Esophagus squamous epithelium (tissue), 5 donors: ENCODE measurements at regions of chr4 and their contacts with region 1.

Region 1: DNA sequence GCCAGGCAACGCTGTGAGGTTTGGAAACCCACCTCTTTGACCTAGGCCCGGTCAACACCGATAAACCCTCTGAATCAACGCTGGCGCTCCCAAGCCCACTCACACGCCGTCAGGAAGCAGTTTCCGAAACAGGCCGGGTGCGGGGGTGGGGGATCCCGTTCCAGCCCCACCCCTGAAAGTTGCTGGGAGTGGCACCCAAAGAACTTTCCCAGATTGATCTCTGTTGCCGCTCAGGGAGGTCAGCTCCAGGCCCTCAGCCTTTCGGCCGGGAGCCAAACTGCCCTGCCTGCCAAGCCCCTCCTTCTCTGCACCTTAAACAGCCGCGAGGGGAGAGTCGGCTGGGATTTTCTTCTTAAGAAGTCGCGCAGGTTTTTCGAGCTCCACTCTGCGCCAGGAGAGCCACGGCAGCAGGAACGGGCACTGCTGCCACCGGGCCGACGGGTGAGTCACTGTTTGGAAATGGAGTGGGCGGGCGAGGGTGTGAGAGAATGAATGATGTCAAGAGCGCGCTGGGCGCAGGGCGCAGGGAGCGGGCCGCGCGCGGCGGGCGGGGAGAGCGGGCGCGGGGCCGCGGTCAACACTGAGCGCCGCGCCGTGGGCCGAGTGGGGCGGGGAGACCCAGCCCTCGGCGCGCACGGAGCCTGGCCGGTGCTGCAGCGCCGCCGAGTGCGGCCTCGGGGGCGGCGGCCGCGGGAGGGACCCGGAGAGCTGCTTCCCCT is at the start of gene SGMS2:
- DNase-seq: peak; percentile 48
- H3K4me3 ChIP-seq: peak within 1 kb of the TSS; percentile 83 to 88 (median 84)
- H3K27ac ChIP-seq: peak within 1 kb of the TSS; percentile 94 to 98 (median 97)
- H3K4me1 ChIP-seq: peaks cover 0 to 38% (median 6%) of the 10 kb centered on the region in 3 donors
- H3K27me3 ChIP-seq: no peaks in the 10 kb centered on the region
- CTCF ChIP-seq: peak in 1 of 6 experiments; percentile 1
- POLR2A ChIP-seq: peak in 3 of 4 donors; percentile 22 to 80 (median 76)
- total RNA-seq, gene SGMS2: 53.4 to 153 (median 114) TPM

Region 2: DNA sequence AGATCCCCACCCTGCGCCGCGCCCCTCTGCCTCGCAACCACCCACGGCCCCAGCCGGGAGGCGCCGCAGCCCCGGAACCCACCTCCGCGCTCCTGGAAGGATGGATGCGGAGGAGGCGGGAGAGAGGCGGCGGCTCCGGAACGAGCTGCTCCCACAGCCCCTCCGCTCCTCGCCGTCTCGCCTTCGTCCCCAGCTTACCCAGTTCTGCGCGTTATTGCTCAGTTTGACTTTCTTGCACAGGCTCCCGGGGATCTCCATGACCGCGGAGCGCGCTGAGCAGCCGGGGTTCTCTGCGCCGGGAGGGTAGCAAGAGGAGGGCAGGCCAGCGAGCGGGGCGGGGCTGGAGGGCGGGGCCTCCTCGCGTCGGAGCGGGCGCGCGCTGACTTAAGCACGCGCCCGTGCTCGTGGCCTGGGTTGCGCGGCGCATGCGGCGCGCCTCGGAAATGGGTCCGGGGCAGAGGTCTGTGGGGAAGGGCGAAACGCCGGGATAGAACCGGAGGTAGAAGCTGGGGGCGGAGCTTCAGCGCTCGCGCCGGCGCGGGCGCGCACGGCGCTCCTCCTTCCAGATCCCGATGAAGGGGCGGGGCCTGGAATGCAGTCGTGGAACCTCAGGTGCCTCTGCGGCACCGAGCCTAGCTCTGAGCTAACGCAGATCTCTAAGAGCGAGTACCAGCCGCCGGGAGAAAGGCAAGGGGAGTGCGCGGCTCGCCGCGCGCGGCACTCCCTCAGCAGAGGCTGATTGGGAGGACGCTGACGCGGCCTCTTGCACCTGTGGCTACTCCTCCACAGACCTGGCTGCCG is 104.4 kb before region 1 on chr4 and contains the start of gene PAPSS1:
- intact Hi-C with region 1: no loop called
- DNase-seq: peak; percentile 73
- H3K4me3 ChIP-seq: peak within 1 kb of the TSS; percentile 77 to 95 (median 91)
- H3K27ac ChIP-seq: peak within 1 kb of the TSS; percentile 85 to 95 (median 92)
- H3K4me1 ChIP-seq: peaks cover 0 to 42% (median 9%) of the 10 kb centered on the region in 3 donors
- H3K27me3 ChIP-seq: no peaks in the 10 kb centered on the region
- CTCF ChIP-seq: no peak
- POLR2A ChIP-seq: peak in 3 of 4 donors; percentile 49 to 80 (median 63)
- total RNA-seq, gene PAPSS1: 30.8 to 54.1 (median 36.0) TPM

Region 3: DNA sequence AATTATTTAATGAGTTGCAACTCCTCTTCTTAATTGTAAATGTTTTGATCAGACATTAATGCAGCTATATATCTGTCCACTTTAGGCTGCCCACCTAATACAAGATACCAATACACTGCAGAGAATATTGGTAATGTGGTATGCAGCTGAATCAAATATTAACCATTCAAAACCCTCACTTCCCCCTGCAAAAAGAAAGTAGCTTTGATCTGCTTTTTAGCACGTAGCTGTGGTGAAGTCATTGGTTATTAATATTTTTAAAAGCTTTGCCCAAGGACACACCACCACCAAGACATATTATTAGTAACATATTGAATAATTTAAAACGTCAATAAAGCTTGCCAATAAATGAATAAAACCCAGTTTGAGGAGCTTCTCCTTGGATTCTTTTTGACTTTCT is 78.2 kb after region 1 on chr4:
- intact Hi-C with region 1: loop called (anchors 5 kb)
- DNase-seq: no peak
- H3K4me3 ChIP-seq: no peak overlapping the region
- H3K27ac ChIP-seq: no peak overlapping the region
- H3K4me1 ChIP-seq: peaks cover 0 to 7% (median 0%) of the 10 kb centered on the region in 3 donors
- H3K27me3 ChIP-seq: no peaks in the 10 kb centered on the region
- CTCF ChIP-seq: no peak
- POLR2A ChIP-seq: no peak

Region 4: GRCh38 chr4:107951551-107951950 is 127.0 kb after region 1 on chr4:
- intact Hi-C with region 1: no loop called
- DNase-seq: no peak
- H3K4me3 ChIP-seq: no peak overlapping the region
- H3K27ac ChIP-seq: no peak overlapping the region
- H3K4me1 ChIP-seq: no peaks in the 10 kb centered on the region
- H3K27me3 ChIP-seq: no peaks in the 10 kb centered on the region
- CTCF ChIP-seq: no peak
- POLR2A ChIP-seq: no peak